Gastrocnemius medialis (tissue), 4 donors: ENCODE measurements at regions of chr1 and their contacts with region 1.

Region 1: DNA sequence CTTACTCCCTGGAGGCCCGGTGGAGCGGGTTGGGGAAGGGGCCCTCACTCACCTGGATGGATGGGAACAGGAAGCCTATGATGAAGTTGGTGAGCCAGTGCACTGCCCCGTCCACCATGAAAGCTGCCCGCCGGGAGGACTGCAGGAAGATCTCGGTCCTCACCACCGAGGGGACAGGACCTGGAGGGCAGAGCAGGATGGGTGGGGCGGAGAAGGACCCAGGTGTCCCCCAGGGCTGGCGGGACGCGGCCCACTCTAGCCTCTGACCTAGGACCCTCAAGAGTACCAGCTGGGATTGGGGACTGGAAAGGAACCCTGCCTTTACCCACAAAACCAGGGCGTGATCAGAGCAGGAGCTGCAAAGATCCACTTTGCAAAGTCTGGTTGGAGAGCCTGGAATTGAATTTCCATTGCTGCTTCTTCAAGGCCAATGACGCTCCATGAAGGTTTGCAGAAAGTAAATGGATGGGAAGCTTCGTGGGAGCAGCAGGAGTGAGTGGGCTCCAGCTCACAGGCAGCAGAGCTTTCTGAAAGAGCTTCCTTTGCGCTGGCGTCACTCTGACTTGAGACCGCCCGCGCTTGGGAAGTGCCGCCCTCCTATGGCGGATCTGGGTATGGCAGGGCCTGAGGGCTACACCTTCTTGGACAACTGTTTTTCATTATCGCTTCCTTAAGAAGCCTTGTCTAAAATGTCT is 21.4 kb downstream of the SLC2A7 start:
- DNase-seq: peak; percentile 33 to 59
- ATAC-seq: peak; percentile 78 to 79
- H3K4me3 ChIP-seq: no peak overlapping the region
- H3K27ac ChIP-seq: no peak overlapping the region
- H3K4me1 ChIP-seq: no peaks in the 10 kb centered on the region
- H3K27me3 ChIP-seq: no peaks in the 10 kb centered on the region
- CTCF ChIP-seq: peak; percentile 71 to 90 (median 80)
- POLR2A ChIP-seq: no peak

Region 2: DNA sequence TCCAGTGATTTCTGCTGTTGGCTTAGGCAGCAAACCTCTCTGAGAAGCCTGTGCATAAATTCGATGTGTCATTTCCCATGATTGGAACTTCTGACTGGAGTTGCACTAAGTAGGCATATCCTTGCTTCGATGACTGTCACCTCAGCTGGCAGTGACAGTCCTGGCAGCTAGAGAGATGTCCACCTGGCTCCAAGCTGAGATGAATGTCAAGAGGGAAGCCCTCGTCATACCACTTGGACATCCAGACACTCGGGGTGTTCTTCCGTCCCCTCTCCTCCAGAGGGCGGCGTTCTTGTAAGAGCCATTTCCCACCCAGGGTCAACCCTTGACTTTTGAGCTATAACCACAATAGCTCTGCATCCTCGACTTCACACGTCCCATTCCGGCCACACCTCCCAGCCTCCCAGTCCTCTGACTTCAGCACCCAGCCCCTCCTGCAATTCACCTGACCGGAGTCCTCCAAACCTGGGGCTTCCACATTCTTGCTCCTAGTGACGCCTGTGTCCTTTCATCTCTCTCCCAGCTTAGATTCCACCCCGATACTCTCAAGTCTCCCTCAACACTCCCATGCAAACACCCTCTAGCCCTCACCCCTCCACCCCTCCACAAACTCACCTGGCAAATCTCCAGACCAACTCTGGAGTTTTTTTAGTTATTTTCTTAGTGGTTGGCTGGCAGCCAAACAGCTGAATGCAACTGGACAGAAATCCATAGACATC is 41.9 kb before region 1 on chr1:
- in situ Hi-C with region 1: no loop called
- intact Hi-C with region 1: loop called (anchors 1 kb)
- DNase-seq: peak in 1 of 2 donors; percentile 20
- ATAC-seq: peak in 1 of 2 donors; percentile 58
- H3K4me3 ChIP-seq: no peak overlapping the region
- H3K27ac ChIP-seq: no peak overlapping the region
- H3K4me1 ChIP-seq: no peaks in the 10 kb centered on the region
- H3K27me3 ChIP-seq: no peaks in the 10 kb centered on the region
- CTCF ChIP-seq: peak in 2 of 5 experiments; percentile 7 to 34
- POLR2A ChIP-seq: no peak

Region 3: DNA sequence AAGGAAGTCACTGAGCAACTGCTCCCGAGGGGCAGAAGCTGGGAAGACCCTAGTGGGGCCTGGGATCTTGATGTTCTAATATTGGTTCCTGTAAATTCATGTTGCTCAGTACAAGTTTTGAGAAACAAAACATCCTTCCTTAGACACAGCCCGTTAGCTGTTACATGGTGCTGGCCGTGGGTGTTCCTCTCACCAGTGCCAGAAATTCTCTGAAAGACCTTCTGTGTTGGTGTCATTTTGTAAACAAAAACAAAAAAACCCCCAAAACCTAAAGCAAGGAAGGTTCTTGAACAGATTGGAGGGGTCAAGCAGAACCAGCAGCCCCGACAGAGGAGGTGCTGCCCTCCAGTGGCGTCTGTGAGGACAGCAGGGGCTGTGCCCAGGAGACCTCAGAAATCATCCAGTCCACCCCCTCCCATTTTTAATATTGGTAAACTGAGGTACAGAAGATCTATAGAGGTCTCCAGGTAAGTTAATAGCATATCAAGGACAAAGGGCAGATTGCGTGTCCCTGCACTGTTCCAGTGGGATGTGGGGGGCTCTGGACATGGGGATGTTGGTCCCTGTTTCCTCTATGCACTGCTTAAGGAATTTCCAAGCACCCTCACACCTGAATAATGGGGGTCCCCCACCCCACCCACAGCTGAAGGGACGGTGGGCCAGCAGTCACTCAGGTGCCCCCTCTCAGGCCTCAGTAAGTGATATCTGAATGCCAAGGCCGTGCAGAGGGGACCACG is 16.8 kb before region 1 on chr1:
- in situ Hi-C with region 1: no loop called
- intact Hi-C with region 1: no loop called
- DNase-seq: peak; percentile 10 to 37
- ATAC-seq: peak in 1 of 2 donors; percentile 55
- H3K4me3 ChIP-seq: no peak overlapping the region
- H3K27ac ChIP-seq: no peak overlapping the region
- H3K4me1 ChIP-seq: peaks cover 3 to 5% of the 10 kb centered on the region in 2 donors
- H3K27me3 ChIP-seq: no peaks in the 10 kb centered on the region
- CTCF ChIP-seq: peak; percentile 80 to 92 (median 89)
- POLR2A ChIP-seq: no peak